Activated CD4-positive, alpha-beta memory T cell treated with anti-CD3 and anti-CD28 coated beads for 36 hours (primary cell): ENCODE measurements at regions of chr1 and their contacts with region 1.

Region 1: GRCh38 chr1:221203224-221204054 is 324.2 kb downstream of the HLX start:
- DNase-seq: peak; percentile 75
- H3K4me3 Mint-ChIP-seq: no peak overlapping the region
- H3K27ac Mint-ChIP-seq: no peak overlapping the region
- H3K4me1 Mint-ChIP-seq: no peaks in the 10 kb centered on the region
- H3K27me3 Mint-ChIP-seq: peaks cover 2% of the 10 kb centered on the region

Region 2: DNA sequence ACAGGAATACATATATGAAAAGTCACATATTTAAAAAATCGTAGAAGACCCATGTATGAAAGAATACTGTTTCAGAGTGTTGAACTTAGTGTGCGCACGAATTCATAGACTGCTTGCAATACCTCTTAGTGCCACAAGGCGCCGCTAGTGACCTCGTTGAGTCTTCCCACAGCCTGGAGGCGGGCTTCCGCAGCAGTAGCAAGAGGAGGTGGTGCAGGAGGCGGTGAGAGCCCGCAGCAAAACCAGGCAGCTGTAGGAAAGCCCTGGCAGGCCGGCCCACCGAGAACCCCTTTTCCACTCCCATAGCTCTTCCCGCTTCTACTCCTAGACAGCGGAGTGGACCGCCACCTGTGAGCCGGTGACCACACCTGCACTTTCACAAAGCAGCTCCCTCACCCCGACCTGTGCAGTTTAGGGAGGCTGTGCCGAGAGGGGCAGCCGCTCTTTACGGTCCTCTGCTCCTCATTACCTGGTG is 393.2 kb before region 1 on chr1:
- CTCF ChIA-PET with region 1: interaction called, 24 read pairs
- POLR2A ChIA-PET with region 1: no interaction called
- intact Hi-C with region 1: loop called (anchors 1 kb)
- DNase-seq: peak; percentile 76
- H3K4me3 Mint-ChIP-seq: peak overlapping the region; percentile 38
- H3K27ac Mint-ChIP-seq: no peak overlapping the region
- H3K4me1 Mint-ChIP-seq: no peaks in the 10 kb centered on the region
- H3K27me3 Mint-ChIP-seq: peaks cover 16% of the 10 kb centered on the region

Region 3: GRCh38 chr1:220873868-220874655 is 329.4 kb before region 1 on chr1:
- CTCF ChIA-PET with region 1: interaction called, 11 read pairs
- POLR2A ChIA-PET with region 1: no interaction called
- intact Hi-C with region 1: loop called (anchors 1 kb)
- DNase-seq: no peak
- H3K4me3 Mint-ChIP-seq: no peak overlapping the region
- H3K27ac Mint-ChIP-seq: no peak overlapping the region
- H3K4me1 Mint-ChIP-seq: peaks cover 20% of the 10 kb centered on the region
- H3K27me3 Mint-ChIP-seq: peaks cover 67% of the 10 kb centered on the region